Esophagus muscularis mucosa (tissue), 4 donors: ENCODE measurements at regions of chr4 and their contacts with region 1.

Region 1: GRCh38 chr4:142883040-142883832 is 37.1 kb upstream of the INPP4B start:
- DNase-seq: no peak
- H3K4me3 ChIP-seq: no peak overlapping the region
- H3K27ac ChIP-seq: no peak overlapping the region
- H3K4me1 ChIP-seq: no peaks in the 10 kb centered on the region
- H3K27me3 ChIP-seq: no peaks in the 10 kb centered on the region
- CTCF ChIP-seq: peak; percentile 53 to 60 (median 56)
- EP300 ChIP-seq: no peak
- POLR2A ChIP-seq: no peak

Region 2: GRCh38 chr4:142671516-142671915 is 211.7 kb before region 1 on chr4:
- intact Hi-C with region 1: no loop called
- DNase-seq: no peak
- H3K4me3 ChIP-seq: no peak overlapping the region
- H3K27ac ChIP-seq: no peak overlapping the region
- H3K4me1 ChIP-seq: no peaks in the 10 kb centered on the region
- H3K27me3 ChIP-seq: no peaks in the 10 kb centered on the region
- CTCF ChIP-seq: no peak
- EP300 ChIP-seq: no peak
- POLR2A ChIP-seq: no peak

Region 3: GRCh38 chr4:143025081-143025704 is 142.0 kb after region 1 on chr4:
- intact Hi-C with region 1: loop called (anchors 5 kb)
- DNase-seq: no peak
- H3K4me3 ChIP-seq: no peak overlapping the region
- H3K27ac ChIP-seq: no peak overlapping the region
- H3K4me1 ChIP-seq: peaks cover 0 to 17% (median 6%) of the 10 kb centered on the region in 4 donors
- H3K27me3 ChIP-seq: no peaks in the 10 kb centered on the region
- CTCF ChIP-seq: peak; percentile 35 to 60 (median 53)
- EP300 ChIP-seq: no peak
- POLR2A ChIP-seq: no peak

Region 4: DNA sequence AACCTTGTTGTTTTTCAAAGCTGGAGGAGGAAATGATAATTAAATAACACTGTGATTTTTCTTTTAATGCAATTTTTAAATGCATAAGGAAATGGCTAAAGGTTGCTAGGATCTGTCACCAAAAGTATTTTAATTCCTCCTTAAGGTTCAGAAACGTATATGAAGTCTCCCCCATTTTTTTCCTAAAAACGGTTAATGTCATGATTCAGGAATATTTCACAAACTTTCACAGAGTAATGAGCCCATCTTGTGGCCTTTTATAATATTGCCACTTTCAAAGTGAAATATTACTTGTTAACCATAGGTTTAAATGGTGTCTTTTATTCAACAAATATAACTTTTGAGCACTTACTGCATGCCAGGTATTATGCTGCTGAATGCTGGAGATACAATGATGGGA is 202.0 kb after region 1 on chr4:
- intact Hi-C with region 1: loop called (anchors 2 kb)
- DNase-seq: no peak
- H3K4me3 ChIP-seq: no peak overlapping the region
- H3K27ac ChIP-seq: no peak overlapping the region
- H3K4me1 ChIP-seq: peaks cover 0 to 8% (median 0%) of the 10 kb centered on the region in 4 donors
- H3K27me3 ChIP-seq: no peaks in the 10 kb centered on the region
- CTCF ChIP-seq: peak; percentile 25 to 37 (median 31)
- EP300 ChIP-seq: no peak
- POLR2A ChIP-seq: no peak

Region 5: DNA sequence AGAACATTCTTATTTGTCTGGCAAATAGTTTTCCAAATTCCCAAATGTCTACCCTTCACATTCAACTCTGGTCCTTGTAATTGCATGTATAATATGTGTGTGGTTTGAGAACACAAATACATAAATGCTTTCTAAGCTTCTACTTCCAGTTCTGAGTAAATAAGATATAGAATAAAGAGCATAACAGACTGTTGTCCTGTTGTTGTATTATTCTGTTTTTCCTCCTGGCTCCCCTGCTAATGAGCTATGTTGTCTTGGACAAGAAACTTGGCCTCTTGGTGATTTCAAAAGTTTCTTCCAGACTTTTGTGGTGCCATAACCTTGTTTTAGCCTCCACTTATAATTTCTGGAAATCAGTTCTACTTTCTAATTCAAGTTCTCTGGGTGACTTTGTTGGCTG is 226.1 kb after region 1 on chr4:
- intact Hi-C with region 1: no loop called
- DNase-seq: no peak
- H3K4me3 ChIP-seq: no peak overlapping the region
- H3K27ac ChIP-seq: no peak overlapping the region
- H3K4me1 ChIP-seq: no peaks in the 10 kb centered on the region
- H3K27me3 ChIP-seq: no peaks in the 10 kb centered on the region
- CTCF ChIP-seq: no peak
- EP300 ChIP-seq: no peak
- POLR2A ChIP-seq: no peak